ENCODE measurements at regions of chr1 and their contacts with region 1.

Region 1: DNA sequence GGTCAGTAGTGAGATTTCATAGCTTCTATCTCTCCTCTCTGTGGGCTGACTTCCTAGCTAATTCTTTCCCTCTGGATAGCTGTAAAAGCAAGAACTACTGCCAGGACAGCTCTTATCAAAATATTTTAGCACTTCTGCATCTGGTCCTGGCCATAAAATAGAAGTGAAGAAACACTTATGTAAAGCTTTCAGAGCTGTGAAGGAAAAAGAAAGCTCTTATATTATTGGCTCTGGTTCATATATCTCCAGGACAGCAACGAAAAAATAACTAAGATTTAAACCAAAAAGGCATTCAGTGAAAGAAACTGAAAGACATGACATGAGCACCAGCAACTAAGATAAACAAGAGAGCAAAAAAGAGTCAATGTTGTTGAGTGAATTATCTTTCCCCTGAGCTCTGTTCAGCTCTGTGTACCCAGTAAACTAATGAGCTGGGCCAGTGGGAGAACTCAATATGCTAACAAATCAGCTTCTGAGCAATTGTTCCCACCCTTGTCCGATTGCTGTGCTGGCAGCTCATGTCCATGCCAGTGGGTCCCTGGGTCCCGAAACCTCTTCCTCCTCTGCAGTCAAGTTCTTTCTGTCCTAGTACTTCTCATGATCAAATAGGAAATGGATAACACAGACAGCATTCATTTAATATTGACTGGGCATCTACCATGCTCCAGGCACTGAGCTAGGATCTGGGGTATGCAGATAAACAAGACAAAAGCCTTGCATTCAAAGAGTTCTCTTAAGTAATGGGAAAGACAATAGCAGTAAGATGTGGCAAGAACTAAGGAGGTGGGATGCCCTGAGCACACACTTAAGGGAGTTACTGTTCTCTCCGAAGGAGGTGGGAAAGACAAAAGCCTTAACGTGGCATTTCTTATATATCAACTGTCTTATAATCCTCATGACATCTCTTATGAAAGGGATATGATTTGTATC is 45.3 kb upstream of the MAN1A2 start:
- DNase-seq: no peak
- ATAC-seq: no peak
- H3K4me3 ChIP-seq: no peak overlapping the region
- H3K4me3 Mint-ChIP-seq: no peak overlapping the region
- H3K27ac ChIP-seq: no peak overlapping the region
- H3K27ac Mint-ChIP-seq: no peak overlapping the region
- H3K4me1 ChIP-seq: no peaks in the 10 kb centered on the region
- H3K4me1 Mint-ChIP-seq: no peaks in the 10 kb centered on the region
- H3K27me3 ChIP-seq: no peaks in the 10 kb centered on the region
- H3K27me3 Mint-ChIP-seq: peaks cover 9% of the 10 kb centered on the region
- CTCF ChIP-seq: no peak

Region 2: DNA sequence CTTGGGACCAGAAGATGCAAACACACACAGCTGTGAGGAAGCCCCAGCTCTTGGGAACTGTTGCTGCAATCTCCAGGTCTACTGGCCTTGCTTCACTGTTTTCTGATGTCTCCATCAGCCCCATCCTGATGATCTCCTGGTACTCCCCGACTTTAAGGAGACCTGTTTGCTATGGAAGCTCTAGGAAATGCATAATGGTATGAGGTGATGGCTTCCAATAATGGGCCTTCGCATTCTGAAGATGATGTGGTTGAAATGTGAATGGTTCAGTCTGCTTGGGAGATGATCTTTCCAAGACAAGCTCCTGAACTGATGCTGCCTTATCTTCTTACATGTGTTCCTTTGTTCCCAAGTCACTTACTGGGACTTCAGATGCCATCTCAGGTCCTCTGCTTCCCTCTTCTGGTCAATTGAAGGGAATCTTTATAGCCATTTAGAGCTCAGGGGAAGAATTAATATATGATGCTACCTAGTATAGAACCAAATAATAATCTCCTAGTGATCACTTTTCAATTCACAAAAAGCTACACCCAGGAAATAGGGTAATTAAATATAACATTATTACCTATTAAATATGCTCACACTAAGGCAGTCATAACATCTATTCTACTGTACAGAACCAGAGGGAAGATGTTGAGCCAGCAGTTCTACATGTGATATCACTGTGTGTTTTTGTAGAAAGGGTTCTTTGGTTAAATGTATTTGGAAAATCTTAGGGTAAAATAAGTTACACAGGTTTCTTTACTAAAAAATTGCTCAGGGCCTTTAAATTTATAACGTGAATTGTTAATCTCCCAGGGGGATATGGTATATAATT is 37.3 kb before region 1 on chr1:
- CTCF ChIA-PET with region 1: no interaction called
- POLR2A ChIA-PET with region 1: no interaction called
- intact Hi-C with region 1: no loop called
- DNase-seq: no peak
- ATAC-seq: no peak
- H3K4me3 ChIP-seq: no peak overlapping the region
- H3K4me3 Mint-ChIP-seq: no peak overlapping the region
- H3K27ac ChIP-seq: no peak overlapping the region
- H3K27ac Mint-ChIP-seq: no peak overlapping the region
- H3K4me1 ChIP-seq: no peaks in the 10 kb centered on the region
- H3K4me1 Mint-ChIP-seq: no peaks in the 10 kb centered on the region
- H3K27me3 ChIP-seq: no peaks in the 10 kb centered on the region
- H3K27me3 Mint-ChIP-seq: peaks cover 7% of the 10 kb centered on the region
- CTCF ChIP-seq: no peak

Region 3: GRCh38 chr1:117392771-117393170 is 70.8 kb after region 1 on chr1:
- CTCF ChIA-PET with region 1: no interaction called
- POLR2A ChIA-PET with region 1: no interaction called
- intact Hi-C with region 1: loop called in 1 of 2 experiments (anchors 5 kb)
- DNase-seq: no peak
- ATAC-seq: no peak
- H3K4me3 ChIP-seq: no peak overlapping the region
- H3K4me3 Mint-ChIP-seq: no peak overlapping the region
- H3K27ac ChIP-seq: no peak overlapping the region
- H3K27ac Mint-ChIP-seq: no peak overlapping the region
- H3K4me1 ChIP-seq: peaks cover 27% of the 10 kb centered on the region
- H3K4me1 Mint-ChIP-seq: peaks cover 76% of the 10 kb centered on the region
- H3K27me3 ChIP-seq: no peaks in the 10 kb centered on the region
- H3K27me3 Mint-ChIP-seq: no peaks in the 10 kb centered on the region
- CTCF ChIP-seq: no peak

Measured in CD8-positive, alpha-beta T cell (primary cell).